ENCODE measurements at regions of chr12 and their contacts with region 1.

Region 1: DNA sequence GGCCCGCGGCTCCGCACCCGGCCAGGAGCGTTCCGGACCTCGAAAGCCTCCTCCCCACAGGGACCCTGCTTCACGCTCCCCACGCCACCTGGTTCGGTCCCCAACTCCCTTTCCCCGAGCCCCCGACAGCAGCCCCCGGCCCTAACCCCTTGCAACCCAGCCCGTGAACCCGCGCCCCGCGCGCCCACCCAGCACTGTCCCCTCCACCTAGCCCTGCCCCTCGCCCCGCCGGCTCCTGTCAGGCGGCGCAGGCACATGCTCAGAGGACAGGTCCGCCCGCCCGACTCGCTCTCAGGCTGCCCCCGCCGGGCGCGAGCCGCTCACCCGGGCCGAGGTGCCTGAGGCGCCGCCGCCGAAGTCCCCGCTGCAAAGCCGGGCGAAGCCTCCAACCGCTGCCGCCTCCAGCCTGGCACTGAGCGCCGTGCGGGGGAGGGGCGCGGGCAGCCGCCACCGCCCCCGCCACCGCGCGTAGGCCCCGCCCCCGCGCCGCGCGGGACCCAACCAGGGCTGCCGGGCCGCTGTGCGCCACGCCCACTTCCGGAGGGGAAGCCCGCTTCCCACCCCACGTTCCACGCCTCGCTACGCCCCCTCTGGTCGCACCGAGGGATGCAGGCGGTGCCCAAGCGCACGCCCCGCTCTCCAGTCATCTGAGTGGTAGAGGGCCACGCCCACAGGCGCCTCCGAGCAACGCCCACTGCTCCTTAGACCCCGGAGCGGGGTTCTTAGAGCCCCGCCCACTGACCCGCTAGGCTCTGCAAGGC is at the start of gene CORO1C:
- DNase-seq: peak; percentile 98
- ATAC-seq: peak; percentile 73
- H3K4me3 Mint-ChIP-seq: peak within 1 kb of the TSS; percentile 97
- H3K27ac Mint-ChIP-seq: peak within 1 kb of the TSS; percentile 96
- H3K4me1 Mint-ChIP-seq: peaks cover 48% of the 10 kb centered on the region
- H3K27me3 Mint-ChIP-seq: no peaks in the 10 kb centered on the region
- CTCF ChIP-seq: no peak
- total RNA-seq, gene CORO1C: 68.3 and 69.4 TPM in 2 replicates

Region 2: DNA sequence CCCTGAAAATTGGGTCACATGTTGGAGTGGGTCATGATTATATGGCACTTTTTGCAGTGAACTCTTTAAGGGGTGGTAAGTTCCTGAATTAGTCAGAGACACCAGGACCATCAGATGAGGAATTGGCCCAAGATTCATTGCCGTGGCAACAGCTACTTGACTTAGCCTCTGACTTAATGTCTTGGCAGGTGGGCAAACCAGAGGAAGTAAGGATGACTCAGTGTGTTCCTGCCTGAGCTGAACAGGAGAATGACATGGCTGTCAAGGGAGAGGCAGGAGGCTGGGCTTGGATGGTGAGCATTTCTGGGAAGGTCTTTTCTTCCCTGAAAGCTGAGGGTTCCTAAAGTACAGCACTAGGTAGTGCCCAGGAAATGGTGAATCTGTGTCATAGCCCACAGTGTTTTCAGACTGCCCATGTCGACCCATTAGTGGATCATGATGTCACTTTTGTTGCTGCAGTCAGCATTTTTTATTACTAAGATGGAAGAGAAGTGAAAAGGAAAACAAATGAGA is 1215.8 kb before region 1 on chr12:
- CTCF ChIA-PET with region 1: no interaction called
- POLR2A ChIA-PET with region 1: no interaction called
- intact Hi-C with region 1: no loop called
- DNase-seq: no peak
- ATAC-seq: peak; percentile 21
- H3K4me3 Mint-ChIP-seq: no peak overlapping the region
- H3K27ac Mint-ChIP-seq: no peak overlapping the region
- H3K4me1 Mint-ChIP-seq: peaks cover 4% of the 10 kb centered on the region
- H3K27me3 Mint-ChIP-seq: no peaks in the 10 kb centered on the region
- CTCF ChIP-seq: no peak

Region 3: GRCh38 chr12:107760809-107761501 is 970.3 kb before region 1 on chr12 and contains the start of gene PRDM4:
- CTCF ChIA-PET with region 1: no interaction called
- POLR2A ChIA-PET with region 1: no interaction called
- intact Hi-C with region 1: loop called (anchors 1 kb)
- DNase-seq: peak; percentile 93
- ATAC-seq: peak; percentile 91
- H3K4me3 Mint-ChIP-seq: peak within 1 kb of the TSS; percentile 89
- H3K27ac Mint-ChIP-seq: peak within 1 kb of the TSS; percentile 86
- H3K4me1 Mint-ChIP-seq: peaks cover 33% of the 10 kb centered on the region
- H3K27me3 Mint-ChIP-seq: no peaks in the 10 kb centered on the region
- CTCF ChIP-seq: no peak
- total RNA-seq, gene PRDM4: 37.8 and 45.2 TPM in 2 replicates

Region 4: GRCh38 chr12:107912421-107913004 is 818.8 kb before region 1 on chr12:
- CTCF ChIA-PET with region 1: no interaction called
- POLR2A ChIA-PET with region 1: no interaction called
- intact Hi-C with region 1: no loop called
- DNase-seq: peak; percentile 44
- ATAC-seq: peak; percentile 57
- H3K4me3 Mint-ChIP-seq: peak overlapping the region; percentile 68
- H3K27ac Mint-ChIP-seq: no peak overlapping the region
- H3K4me1 Mint-ChIP-seq: peaks cover 7% of the 10 kb centered on the region
- H3K27me3 Mint-ChIP-seq: peaks cover 59% of the 10 kb centered on the region
- CTCF ChIP-seq: no peak

Region 5: GRCh38 chr12:108457006-108457733 is 274.1 kb before region 1 on chr12:
- CTCF ChIA-PET with region 1: no interaction called
- POLR2A ChIA-PET with region 1: no interaction called
- intact Hi-C with region 1: no loop called
- DNase-seq: no peak
- ATAC-seq: no peak
- H3K4me3 Mint-ChIP-seq: no peak overlapping the region
- H3K27ac Mint-ChIP-seq: no peak overlapping the region
- H3K4me1 Mint-ChIP-seq: no peaks in the 10 kb centered on the region
- H3K27me3 Mint-ChIP-seq: peaks cover 11% of the 10 kb centered on the region
- CTCF ChIP-seq: no peak

Region 6: DNA sequence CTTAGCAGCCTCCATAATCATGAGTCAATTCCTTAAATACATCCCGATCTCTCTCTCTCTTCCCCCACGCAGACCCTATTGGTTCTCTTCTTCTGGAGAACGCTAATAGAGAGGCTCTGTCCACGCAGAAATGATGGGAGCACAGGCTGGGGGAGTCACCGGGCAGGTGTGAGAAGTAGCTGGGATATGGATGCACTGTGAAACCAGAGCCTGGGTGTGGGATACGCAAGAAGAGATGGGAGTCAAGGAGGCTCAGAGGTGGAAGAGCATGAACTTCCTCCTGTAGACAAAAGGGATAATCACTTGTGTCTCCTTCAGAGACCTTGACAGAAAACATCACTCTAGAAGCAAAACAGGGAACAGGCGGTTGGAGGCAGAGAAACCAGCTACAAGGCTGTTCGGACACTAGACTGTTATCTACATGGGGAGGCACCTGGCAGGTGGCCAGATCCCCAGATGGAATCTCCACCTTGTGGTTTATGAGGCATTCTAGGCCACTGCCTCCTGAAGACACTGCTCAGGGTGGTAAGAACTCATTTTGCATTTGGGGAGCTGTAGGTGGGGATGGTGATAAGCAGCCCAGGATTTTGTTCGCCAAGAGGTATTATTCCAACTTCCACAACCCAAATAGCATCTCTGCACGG is 90.4 kb before region 1 on chr12:
- CTCF ChIA-PET with region 1: no interaction called
- POLR2A ChIA-PET with region 1: interaction called, 23 read pairs
- intact Hi-C with region 1: no loop called
- DNase-seq: no peak
- ATAC-seq: no peak
- H3K4me3 Mint-ChIP-seq: peak overlapping the region; percentile 30
- H3K27ac Mint-ChIP-seq: peak overlapping the region; percentile 83
- H3K4me1 Mint-ChIP-seq: peaks cover 93% of the 10 kb centered on the region
- H3K27me3 Mint-ChIP-seq: no peaks in the 10 kb centered on the region
- CTCF ChIP-seq: no peak

Region 7: DNA sequence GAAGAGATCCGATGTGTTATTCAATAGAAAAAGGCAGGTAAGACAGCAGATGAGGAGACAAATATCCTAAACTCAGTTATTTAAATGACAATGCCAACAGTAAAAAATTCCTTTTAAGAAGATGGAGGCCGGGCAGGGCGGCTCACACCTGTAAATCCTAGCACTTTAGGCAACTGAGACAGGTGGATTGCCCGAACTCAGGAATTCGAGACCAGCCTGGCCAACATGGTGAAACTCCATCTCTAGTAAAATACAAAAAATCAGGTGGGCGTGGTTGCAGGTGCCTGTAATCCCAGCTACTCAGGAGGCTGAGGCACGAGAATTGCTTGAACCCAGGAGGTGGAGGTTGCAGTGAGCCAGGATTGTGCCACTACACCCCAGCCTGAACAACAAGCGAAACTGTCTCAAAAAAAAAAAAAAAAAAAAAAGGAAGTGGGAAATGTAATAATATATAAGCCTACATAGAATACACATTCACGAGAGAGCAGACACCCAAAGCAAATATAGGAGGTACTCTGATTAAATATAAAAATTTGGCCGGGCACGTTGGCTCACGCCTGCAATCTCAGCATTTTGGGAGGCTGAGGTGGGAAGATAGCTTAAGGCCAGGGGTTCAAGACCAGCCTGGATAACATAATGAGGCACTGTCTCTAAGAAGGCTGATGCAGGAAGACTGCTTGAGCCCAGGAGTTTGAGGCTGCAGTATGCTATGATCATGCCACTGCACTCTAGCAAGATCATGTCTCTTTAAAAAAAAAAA is 18.9 kb before region 1 on chr12:
- CTCF ChIA-PET with region 1: no interaction called
- POLR2A ChIA-PET with region 1: interaction called, 12 read pairs
- intact Hi-C with region 1: loop called (anchors 1 kb)
- DNase-seq: no peak
- ATAC-seq: peak; percentile 73
- H3K4me3 Mint-ChIP-seq: peak overlapping the region; percentile 64
- H3K27ac Mint-ChIP-seq: peak overlapping the region; percentile 56
- H3K4me1 Mint-ChIP-seq: peaks cover 60% of the 10 kb centered on the region
- H3K27me3 Mint-ChIP-seq: no peaks in the 10 kb centered on the region
- CTCF ChIP-seq: no peak

Region 8: GRCh38 chr12:108856428-108857157 is 125.3 kb after region 1 on chr12:
- CTCF ChIA-PET with region 1: no interaction called
- POLR2A ChIA-PET with region 1: no interaction called
- intact Hi-C with region 1: loop called (anchors 5 kb)
- DNase-seq: no peak
- ATAC-seq: peak; percentile 7
- H3K4me3 Mint-ChIP-seq: peak overlapping the region; percentile 94
- H3K27ac Mint-ChIP-seq: peak overlapping the region; percentile 88
- H3K4me1 Mint-ChIP-seq: peaks cover 59% of the 10 kb centered on the region
- H3K27me3 Mint-ChIP-seq: no peaks in the 10 kb centered on the region
- CTCF ChIP-seq: no peak

Region 9: GRCh38 chr12:109385339-109386067 is 654.2 kb after region 1 on chr12:
- CTCF ChIA-PET with region 1: no interaction called
- POLR2A ChIA-PET with region 1: no interaction called
- intact Hi-C with region 1: no loop called
- DNase-seq: no peak
- ATAC-seq: no peak
- H3K4me3 Mint-ChIP-seq: no peak overlapping the region
- H3K27ac Mint-ChIP-seq: no peak overlapping the region
- H3K4me1 Mint-ChIP-seq: no peaks in the 10 kb centered on the region
- H3K27me3 Mint-ChIP-seq: peaks cover 4% of the 10 kb centered on the region
- CTCF ChIP-seq: no peak

Measured in activated B cell treated with CpG ODN at 0.5 μM for 24 hours (primary cell).